ENCODE measurements at regions of chr9 and their contacts with region 1.

Region 1: DNA sequence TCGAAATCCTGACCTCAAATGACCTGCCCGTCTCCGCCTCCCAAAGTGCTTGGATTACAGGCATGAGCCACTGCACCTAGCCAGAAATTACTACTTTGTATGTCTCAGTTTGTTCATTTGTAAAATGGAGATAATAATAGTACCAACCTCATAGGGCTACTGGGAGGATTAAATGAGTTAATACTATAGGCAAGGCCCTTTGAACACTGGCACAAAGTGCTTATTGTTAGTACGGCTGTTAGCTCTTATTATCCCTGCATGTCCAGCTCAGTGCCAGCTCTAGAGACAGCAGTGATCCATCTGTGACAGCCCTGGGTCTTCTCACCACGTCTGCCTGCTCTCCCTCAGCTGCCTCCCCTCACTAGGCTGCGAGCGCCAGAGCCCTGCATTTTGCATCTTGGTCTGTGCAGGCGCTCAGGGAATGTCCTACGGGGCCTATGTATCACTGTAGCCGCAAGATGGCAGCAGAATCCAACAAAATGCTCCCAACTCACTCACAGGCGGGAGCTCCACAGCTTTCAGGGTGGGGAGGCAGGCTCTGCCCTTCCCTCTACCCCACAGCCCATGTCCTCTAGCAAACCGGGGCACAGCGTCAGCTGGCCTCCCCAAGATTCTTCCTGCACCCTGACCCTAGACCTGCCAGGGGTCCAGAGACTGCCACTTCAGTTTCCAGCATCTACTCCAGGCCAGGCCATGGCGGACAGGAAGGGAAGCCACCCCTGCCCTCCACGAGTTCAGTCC is 17.7 kb upstream of the AKNA start:
- DNase-seq: peak; percentile 50 to 89 (median 82)
- H3K4me3 ChIP-seq: no peak overlapping the region
- H3K27ac ChIP-seq: peak overlapping the region in 55 of 59 donors; percentile 7 to 87 (median 67)
- H3K27me3 ChIP-seq: no peaks in the 10 kb centered on the region
- CTCF ChIP-seq: peak; percentile 52 to 93 (median 82)

Region 2: DNA sequence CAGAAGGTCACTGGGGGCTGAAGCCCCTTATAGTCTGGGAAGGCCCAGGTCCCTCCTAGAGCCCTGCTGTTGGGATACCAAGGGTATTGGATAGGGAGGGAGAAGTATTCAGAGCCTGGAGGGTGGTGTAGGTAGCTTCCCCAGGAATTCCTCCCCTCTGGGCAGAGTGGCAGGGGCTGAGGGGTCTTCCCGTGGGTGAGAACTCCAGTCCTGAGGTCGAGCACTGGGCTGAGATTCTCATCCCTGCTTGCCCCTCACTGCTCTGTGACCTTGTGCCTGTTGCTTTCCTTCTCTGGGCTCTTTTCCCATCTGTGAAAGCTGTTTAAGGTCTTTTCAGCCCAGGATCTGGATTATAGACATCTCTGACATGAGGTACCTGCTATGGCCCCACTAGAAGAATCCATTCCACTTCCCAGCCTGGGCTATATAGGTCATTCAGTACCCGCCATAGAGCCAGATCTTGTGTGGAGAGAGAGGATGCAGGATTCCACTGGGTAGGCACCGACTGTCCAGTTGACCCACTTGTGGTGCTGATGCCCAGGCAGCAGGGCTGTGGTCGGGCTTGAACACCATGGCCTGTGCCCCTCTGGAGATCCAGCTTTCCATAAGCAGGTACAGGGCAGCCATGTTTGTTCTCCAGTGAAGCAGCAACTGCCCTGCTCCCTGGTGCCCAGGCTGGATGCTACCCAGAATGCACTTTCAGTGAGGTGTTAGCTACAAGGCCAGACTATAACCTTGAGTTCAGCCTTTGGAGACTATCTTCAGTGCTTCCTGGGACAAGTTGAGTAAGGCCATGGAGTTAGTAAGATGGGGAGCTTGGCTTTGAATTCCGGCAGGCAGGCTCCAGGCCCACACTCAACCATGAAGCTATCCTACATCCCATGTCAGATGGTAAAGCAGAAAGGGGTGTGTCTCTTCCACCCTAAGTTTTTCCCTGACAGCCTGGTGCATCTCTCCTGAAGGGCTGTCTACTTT is 387.4 kb before region 1 on chr9:
- intact Hi-C with region 1: no loop called
- DNase-seq: peak in 2 of 10 donors; percentile 8 to 10
- H3K4me3 ChIP-seq: no peak overlapping the region
- H3K27ac ChIP-seq: no peak overlapping the region
- H3K27me3 ChIP-seq: no peaks in the 10 kb centered on the region
- CTCF ChIP-seq: no peak

Region 3: DNA sequence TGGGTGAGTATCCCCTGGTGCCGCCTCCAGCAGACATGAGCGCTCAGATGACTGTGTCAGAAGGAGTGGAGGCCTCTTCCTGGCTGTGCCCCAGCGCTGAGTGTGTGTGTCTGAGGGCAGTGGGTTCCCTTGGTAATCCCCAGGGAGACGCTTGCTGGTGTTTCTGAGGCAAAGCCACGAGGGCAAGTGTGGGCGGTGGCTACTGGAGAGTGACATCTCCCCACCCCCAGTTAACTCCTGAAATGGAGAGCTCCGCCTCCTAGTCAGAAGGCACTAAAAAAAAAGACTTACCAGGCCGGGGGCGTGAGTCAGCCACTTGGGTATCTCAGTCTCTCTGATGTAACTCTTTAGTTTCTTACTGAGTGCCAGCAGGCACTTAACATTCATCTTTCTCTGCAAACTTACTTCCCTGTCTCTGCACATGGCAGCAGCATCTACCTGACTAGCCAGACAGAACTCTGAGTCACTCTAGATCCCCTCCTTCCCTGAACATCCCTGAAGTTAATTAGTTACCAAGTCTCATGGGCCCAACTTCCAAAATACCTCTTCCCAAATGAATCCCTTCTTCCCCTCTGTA is 56.5 kb before region 1 on chr9:
- intact Hi-C with region 1: loop called in 1 of 2 experiments (anchors 10 kb)
- DNase-seq: peak in 7 of 10 donors; percentile 39 to 81 (median 68)
- H3K4me3 ChIP-seq: no peak overlapping the region
- H3K27ac ChIP-seq: peak overlapping the region in 48 of 59 donors; percentile 24 to 92 (median 78)
- H3K27me3 ChIP-seq: no peaks in the 10 kb centered on the region
- CTCF ChIP-seq: no peak

Region 4: DNA sequence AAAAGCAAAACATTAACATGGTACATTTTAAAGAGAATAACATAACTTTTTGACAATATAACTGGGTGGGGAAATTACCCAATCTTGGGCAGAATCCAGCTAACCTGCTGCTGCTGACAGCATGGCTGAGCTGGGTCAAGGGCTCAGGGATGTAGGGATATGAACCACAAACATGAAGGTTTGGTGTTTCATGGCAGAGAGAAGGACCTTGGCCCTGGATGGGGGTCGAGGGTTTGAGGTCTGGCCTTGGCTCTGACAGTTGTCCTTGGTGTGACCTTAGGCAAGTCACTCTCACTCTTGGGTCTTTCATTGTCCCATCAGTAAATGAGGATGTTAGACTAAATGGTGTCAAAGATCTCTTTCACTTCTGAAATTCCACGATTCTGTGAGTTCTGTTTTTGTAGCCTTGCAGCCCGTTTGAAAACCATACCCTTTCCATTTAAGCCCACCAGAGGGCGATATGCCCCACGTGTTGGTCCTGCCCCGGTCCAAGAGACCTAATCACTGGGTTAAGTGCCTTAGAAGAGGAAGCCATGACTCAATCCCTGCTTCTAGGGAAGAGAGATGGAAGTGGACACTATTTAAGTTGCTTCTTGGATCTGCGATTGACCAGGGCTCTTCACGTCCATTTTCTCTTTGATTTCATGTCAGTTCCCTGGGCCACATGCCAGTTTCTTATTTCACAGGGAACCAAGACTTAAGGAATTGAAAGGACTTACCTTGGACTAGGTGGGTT is 333.3 kb after region 1 on chr9:
- intact Hi-C with region 1: loop called in 1 of 2 experiments (anchors 10 kb)
- DNase-seq: peak in 7 of 10 donors; percentile 18 to 72 (median 55)
- H3K4me3 ChIP-seq: no peak overlapping the region
- H3K27ac ChIP-seq: no peak overlapping the region
- H3K27me3 ChIP-seq: peaks cover 0 to 3% (median 0%) of the 10 kb centered on the region in 45 donors
- CTCF ChIP-seq: peak; percentile 64 to 93 (median 82)

Region 5: GRCh38 chr9:115524453-115525059 is 1119.1 kb after region 1 on chr9:
- intact Hi-C with region 1: loop called in 1 of 2 experiments (anchors 10 kb)
- DNase-seq: peak in 2 of 10 donors; percentile 12 to 20
- H3K4me3 ChIP-seq: no peak overlapping the region
- H3K27ac ChIP-seq: no peak overlapping the region
- H3K27me3 ChIP-seq: peaks cover 0 to 13% (median 0%) of the 10 kb centered on the region in 45 donors
- CTCF ChIP-seq: peak; percentile 48 to 89 (median 79)